K562 (cell line): ENCODE measurements at regions of chr9 and their contacts with region 1.

Region 1: GRCh38 chr9:99076483-99077171 is 28.3 kb upstream of the TGFBR1 start:
- DNase-seq: peak; percentile 67 to 86 (median 77)
- ATAC-seq: peak; percentile 27
- H3K4me3 ChIP-seq: no peak overlapping the region
- H3K27ac ChIP-seq: peak overlapping the region; percentile 96
- H3K4me1 ChIP-seq: peaks cover 23 to 53% of the 10 kb centered on the region in 2 experiments
- H3K27me3 ChIP-seq: no peaks in the 10 kb centered on the region
- CTCF ChIP-seq: no peak
- EP300 ChIP-seq: peak; percentile 59
- POLR2A ChIP-seq: no peak
- RAD21 ChIP-seq: peak in 1 of 2 experiments; percentile 13; a peak in 1 of 4 replicates

Region 2: DNA sequence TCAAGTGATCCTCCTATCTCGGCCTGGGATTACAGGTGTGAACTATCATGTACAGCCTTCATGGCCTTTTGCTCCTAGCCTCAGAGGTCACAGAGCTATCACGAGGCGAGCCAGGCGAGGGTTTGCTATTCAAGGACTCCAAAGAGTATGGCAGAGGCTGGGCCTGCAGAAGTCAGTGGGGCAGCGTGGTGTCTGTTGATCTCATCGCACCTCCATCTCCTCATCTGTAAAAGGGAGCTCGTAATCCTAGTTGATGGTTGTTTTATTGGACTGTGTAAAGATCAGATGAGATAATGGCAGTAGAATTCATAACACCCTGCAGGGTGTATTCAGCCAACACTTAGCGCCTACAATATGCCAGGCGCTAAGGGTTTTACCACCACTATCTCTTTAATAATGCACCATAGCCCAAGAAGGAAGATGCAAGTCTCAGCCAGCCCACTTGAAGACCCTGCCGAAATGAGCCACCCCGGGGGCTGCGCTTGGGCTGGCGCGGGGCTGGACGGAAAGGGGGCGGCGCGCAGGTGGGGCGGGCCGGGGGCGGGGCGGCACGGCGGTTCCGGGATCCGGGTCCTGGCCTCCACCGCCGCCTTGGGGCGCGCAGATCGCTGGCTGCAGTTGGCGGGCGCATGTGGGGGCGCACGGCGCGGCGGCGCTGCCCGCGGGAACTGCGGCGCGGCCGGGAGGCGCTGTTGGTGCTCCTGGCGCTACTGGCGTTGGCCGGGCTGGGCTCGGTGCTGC is 269.4 kb before region 1 on chr9 and contains the start of gene GALNT12:
- CTCF ChIA-PET with region 1: no interaction called
- POLR2A ChIA-PET with region 1: no interaction called
- in situ Hi-C with region 1: no loop called
- intact Hi-C with region 1: loop called (anchors 5 kb)
- DNase-seq: peak; percentile 80 to 92 (median 89)
- ATAC-seq: peak; percentile 75
- H3K4me3 ChIP-seq: peak within 1 kb of the TSS; percentile 66
- H3K27ac ChIP-seq: peak within 1 kb of the TSS; percentile 59
- H3K4me1 ChIP-seq: peaks cover 31 to 57% of the 10 kb centered on the region in 2 experiments
- H3K27me3 ChIP-seq: no peaks in the 10 kb centered on the region
- CTCF ChIP-seq: peak in 1 of 3 experiments; percentile 41; a peak in 1 of 6 replicates
- EP300 ChIP-seq: no peak
- POLR2A ChIP-seq: no peak
- RAD21 ChIP-seq: no peak
- polyA plus RNA-seq, gene GALNT12: 29.7 to 33.7 TPM

Region 3: DNA sequence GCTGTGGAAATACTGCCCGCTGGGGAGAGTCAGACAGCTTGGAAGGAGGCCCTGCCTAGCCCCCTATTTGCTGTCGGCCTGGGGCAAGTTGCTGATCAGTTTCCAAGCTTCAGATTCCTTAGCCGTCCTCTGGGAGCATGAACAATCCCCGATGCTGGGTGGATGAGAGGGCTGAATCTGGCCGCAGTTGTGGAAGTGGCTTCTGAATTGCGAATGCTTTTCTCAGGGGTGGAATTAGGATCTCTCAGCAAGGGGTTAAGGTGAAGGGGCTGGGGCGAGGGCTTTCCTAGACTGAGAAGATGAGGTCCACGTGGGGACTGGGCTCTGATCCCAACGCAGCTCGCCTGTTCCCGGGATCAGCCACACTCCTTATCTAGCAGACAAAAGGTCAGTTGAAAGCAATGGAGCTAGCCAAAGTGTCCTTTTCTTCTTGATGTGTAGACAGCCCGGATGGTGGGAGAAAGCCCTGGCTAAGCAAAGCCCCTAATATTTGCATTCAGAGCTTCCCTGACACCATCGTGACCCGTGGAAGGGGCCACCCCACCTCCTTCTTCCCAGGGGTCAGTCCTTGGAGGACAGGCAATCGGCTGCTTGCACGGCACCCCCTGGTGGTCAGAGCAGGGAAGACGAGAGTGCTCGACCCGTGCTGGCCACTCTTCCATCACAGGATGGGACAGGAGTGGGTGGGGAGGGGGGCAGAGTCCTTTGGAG is 78.0 kb before region 1 on chr9:
- CTCF ChIA-PET with region 1: no interaction called
- POLR2A ChIA-PET with region 1: interaction called, 8 read pairs
- in situ Hi-C with region 1: no loop called
- intact Hi-C with region 1: loop called (anchors 1 kb)
- DNase-seq: peak; percentile 83 to 87 (median 86)
- ATAC-seq: peak; percentile 98
- H3K4me3 ChIP-seq: no peak overlapping the region
- H3K27ac ChIP-seq: no peak overlapping the region
- H3K4me1 ChIP-seq: peaks cover 24 to 27% of the 10 kb centered on the region in 2 experiments
- H3K27me3 ChIP-seq: 0 out of 5 replicates have a peak, but pooled peaks cover 0 to 4% of the 10 kb centered on the region in 2 experiments
- CTCF ChIP-seq: peak; percentile 85 to 96 (median 93)
- EP300 ChIP-seq: no peak
- POLR2A ChIP-seq: no peak
- RAD21 ChIP-seq: peak; percentile 92 to 97

Region 4: DNA sequence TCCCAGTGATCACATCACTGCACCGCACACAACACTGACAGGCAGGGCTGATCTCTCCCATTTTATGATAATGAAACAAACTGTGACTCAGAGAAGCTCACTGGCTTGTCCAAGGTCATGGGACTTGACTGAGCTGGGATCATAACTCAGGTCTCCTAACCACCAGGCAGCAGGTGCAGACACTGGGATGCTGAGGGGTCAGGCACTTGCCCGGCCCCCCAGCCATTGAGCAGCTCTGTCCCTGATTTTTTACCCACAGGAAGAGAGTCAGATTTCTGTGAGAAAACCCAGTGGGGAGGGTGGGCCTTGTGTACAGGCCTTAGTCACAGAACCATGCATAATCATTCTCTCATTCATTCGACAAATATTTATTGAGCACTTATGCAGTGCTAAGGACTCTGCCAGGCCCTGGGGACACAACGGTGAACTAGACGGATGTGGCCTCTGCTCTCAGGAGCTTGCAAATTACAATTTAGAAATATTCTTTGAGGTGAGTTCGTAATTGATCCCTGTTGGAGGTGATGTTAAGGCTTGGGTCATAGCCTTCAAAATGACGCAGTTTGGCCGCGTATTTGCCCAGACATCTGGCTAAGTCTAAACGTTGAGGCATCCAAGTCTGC is 26.2 kb before region 1 on chr9:
- CTCF ChIA-PET with region 1: no interaction called
- POLR2A ChIA-PET with region 1: interaction called, 20 read pairs
- in situ Hi-C with region 1: no loop called
- intact Hi-C with region 1: no loop called
- DNase-seq: peak in 2 of 4 experiments; percentile 38
- ATAC-seq: peak; percentile 47
- H3K4me3 ChIP-seq: no peak overlapping the region
- H3K27ac ChIP-seq: no peak overlapping the region
- H3K4me1 ChIP-seq: peaks cover 17 to 41% of the 10 kb centered on the region in 2 experiments
- H3K27me3 ChIP-seq: no peaks in the 10 kb centered on the region
- CTCF ChIP-seq: no peak
- EP300 ChIP-seq: no peak
- POLR2A ChIP-seq: no peak
- RAD21 ChIP-seq: no peak

Region 5: GRCh38 chr9:99066571-99067078 is 10.0 kb before region 1 on chr9:
- CTCF ChIA-PET with region 1: no interaction called
- POLR2A ChIA-PET with region 1: interaction called, 16 read pairs
- in situ Hi-C with region 1: no loop called
- intact Hi-C with region 1: no loop called
- DNase-seq: no peak
- ATAC-seq: peak; percentile 10; the same call in 1 of the 3 replicates
- H3K4me3 ChIP-seq: no peak overlapping the region
- H3K27ac ChIP-seq: no peak overlapping the region
- H3K4me1 ChIP-seq: peaks cover 6 to 25% of the 10 kb centered on the region in 2 experiments; a peak in 4 of 5 replicates
- H3K27me3 ChIP-seq: no peaks in the 10 kb centered on the region
- CTCF ChIP-seq: no peak
- EP300 ChIP-seq: no peak
- POLR2A ChIP-seq: no peak
- RAD21 ChIP-seq: no peak

Region 6: GRCh38 chr9:99104459-99105151 is 28.0 kb after region 1 on chr9 and contains the start of gene TGFBR1:
- CTCF ChIA-PET with region 1: no interaction called
- POLR2A ChIA-PET with region 1: interaction called, 40 read pairs
- in situ Hi-C with region 1: no loop called
- intact Hi-C with region 1: loop called (anchors 1 kb)
- DNase-seq: peak; percentile 96 to 99 (median 99)
- ATAC-seq: peak; percentile 92
- H3K4me3 ChIP-seq: peak within 1 kb of the TSS; percentile 76
- H3K27ac ChIP-seq: peak within 1 kb of the TSS; percentile 75
- H3K4me1 ChIP-seq: peaks cover 22 to 38% of the 10 kb centered on the region in 2 experiments
- H3K27me3 ChIP-seq: no peaks in the 10 kb centered on the region
- CTCF ChIP-seq: peak; percentile 18 to 39 (median 34); a peak in 3 of 6 replicates
- EP300 ChIP-seq: no peak
- POLR2A ChIP-seq: peak; percentile 74
- RAD21 ChIP-seq: peak; percentile 46 to 65
- polyA plus RNA-seq, gene TGFBR1: 15.9 to 57.6 TPM

Region 7: GRCh38 chr9:99235926-99236634 is 159.5 kb after region 1 on chr9:
- CTCF ChIA-PET with region 1: no interaction called
- POLR2A ChIA-PET with region 1: no interaction called
- in situ Hi-C with region 1: no loop called
- intact Hi-C with region 1: no loop called
- DNase-seq: no peak
- ATAC-seq: no peak; the same call in 2 of the 3 replicates
- H3K4me3 ChIP-seq: no peak overlapping the region
- H3K27ac ChIP-seq: no peak overlapping the region
- H3K4me1 ChIP-seq: peaks cover 0 to 3% of the 10 kb centered on the region in 2 experiments; a peak in 2 of 5 replicates
- H3K27me3 ChIP-seq: no peaks in the 10 kb centered on the region
- CTCF ChIP-seq: no peak
- EP300 ChIP-seq: no peak
- POLR2A ChIP-seq: no peak
- RAD21 ChIP-seq: no peak